ENCODE measurements at regions of chr10 and their contacts with region 1.

Region 1: DNA sequence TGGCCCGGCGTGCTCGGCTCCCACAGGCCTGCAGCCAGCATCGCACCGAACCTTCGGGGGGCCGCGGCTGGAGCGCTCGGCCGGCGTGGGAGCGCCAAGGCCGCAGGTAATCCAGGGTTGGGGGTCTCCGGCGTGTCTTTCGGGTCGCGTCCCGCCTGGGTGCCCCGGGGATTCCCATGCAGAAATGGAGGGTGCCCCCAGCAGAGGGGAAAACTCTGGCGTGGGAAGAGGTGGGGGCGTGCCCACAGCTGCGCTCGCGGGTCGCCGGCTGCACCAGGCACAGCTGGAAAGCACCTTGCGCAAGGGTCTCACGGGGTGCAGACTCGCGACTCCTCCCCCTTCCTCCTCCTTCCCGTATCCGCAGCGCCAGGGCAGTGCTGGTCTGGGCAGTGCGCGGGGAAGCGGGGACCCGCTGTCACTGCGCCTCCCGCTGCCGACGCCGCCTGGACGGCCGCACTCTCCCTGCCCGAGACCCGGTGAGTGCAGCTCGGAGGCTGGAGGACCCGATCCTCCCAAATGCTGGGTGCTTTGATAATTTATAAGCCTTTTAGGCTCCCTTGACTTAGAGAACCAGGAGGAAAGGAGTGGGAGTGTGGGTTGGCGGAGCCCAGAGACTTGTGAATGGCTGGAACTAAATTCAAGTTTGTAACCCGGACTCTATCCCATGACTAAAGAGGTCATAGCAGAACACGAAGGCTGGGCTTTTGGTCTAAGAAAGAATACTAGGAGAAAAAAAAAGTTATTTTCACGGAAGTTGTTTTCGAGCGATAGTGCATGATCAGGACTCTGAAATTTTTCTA is 489 bp downstream of the MAP3K8 start:
- DNase-seq: peak; percentile 91 to 95
- ATAC-seq: peak; percentile 77 to 84 (median 81)
- H3K4me3 ChIP-seq: peak overlapping the region; percentile 93
- H3K27ac ChIP-seq: peak overlapping the region; percentile 90
- H3K4me1 ChIP-seq: peaks cover 44% of the 10 kb centered on the region
- H3K27me3 ChIP-seq: no peaks in the 10 kb centered on the region
- CTCF ChIP-seq: no peak

Region 2: GRCh38 chr10:30270247-30270646 is 164.2 kb before region 1 on chr10:
- intact Hi-C with region 1: no loop called
- DNase-seq: no peak
- ATAC-seq: no peak
- H3K4me3 ChIP-seq: no peak overlapping the region
- H3K27ac ChIP-seq: no peak overlapping the region
- H3K4me1 ChIP-seq: no peaks in the 10 kb centered on the region
- H3K27me3 ChIP-seq: no peaks in the 10 kb centered on the region
- CTCF ChIP-seq: no peak

Region 3: GRCh38 chr10:30510169-30510930 is 75.9 kb after region 1 on chr10:
- intact Hi-C with region 1: loop called in 1 of 2 experiments (anchors 5 kb)
- DNase-seq: peak; percentile 49 to 78
- ATAC-seq: peak; percentile 91 to 100 (median 100)
- H3K4me3 ChIP-seq: no peak overlapping the region
- H3K27ac ChIP-seq: peak overlapping the region; percentile 51
- H3K4me1 ChIP-seq: peaks cover 19% of the 10 kb centered on the region
- H3K27me3 ChIP-seq: no peaks in the 10 kb centered on the region
- CTCF ChIP-seq: peak; percentile 27